ENCODE measurements at regions of chr12 and their contacts with region 1.

Region 1: GRCh38 chr12:104906695-104907094 is 51.4 kb downstream of the SLC41A2 start:
- DNase-seq: no peak
- H3K4me3 ChIP-seq: no peak overlapping the region
- H3K27ac ChIP-seq: no peak overlapping the region
- H3K4me1 ChIP-seq: no peaks in the 10 kb centered on the region
- H3K27me3 ChIP-seq: no peaks in the 10 kb centered on the region
- CTCF ChIP-seq: no peak

Region 2: GRCh38 chr12:104177663-104178501 is 728.8 kb before region 1 on chr12:
- CTCF ChIA-PET with region 1: interaction called, 13 read pairs
- POLR2A ChIA-PET with region 1: no interaction called
- intact Hi-C with region 1: no loop called
- DNase-seq: peak; percentile 73 to 88
- H3K4me3 ChIP-seq: peak overlapping the region; percentile 18; the same call in 1 of the 2 replicates
- H3K27ac ChIP-seq: peak overlapping the region; percentile 56
- H3K4me1 ChIP-seq: peaks cover 38% of the 10 kb centered on the region
- H3K27me3 ChIP-seq: no peaks in the 10 kb centered on the region
- CTCF ChIP-seq: peak; percentile 60; the same call in 1 of the 2 replicates

Measured in PC-9 (cell line).